Activated T-helper 1 cell treated with anti-CD3 and anti-CD28 coated beads, Interleukin-12 subunit alpha, Interleukin-12 subunit beta, Interleukin-2, Interleukin-4 antibody, amounts not matched to agents 30 ng/mL and 10 ng/mL and 1 ng/mL, durations not matched to agents 14 hours and 24 hours and 36 hours (primary cell): ENCODE measurements at regions of chr10 and their contacts with region 1.

Region 1: DNA sequence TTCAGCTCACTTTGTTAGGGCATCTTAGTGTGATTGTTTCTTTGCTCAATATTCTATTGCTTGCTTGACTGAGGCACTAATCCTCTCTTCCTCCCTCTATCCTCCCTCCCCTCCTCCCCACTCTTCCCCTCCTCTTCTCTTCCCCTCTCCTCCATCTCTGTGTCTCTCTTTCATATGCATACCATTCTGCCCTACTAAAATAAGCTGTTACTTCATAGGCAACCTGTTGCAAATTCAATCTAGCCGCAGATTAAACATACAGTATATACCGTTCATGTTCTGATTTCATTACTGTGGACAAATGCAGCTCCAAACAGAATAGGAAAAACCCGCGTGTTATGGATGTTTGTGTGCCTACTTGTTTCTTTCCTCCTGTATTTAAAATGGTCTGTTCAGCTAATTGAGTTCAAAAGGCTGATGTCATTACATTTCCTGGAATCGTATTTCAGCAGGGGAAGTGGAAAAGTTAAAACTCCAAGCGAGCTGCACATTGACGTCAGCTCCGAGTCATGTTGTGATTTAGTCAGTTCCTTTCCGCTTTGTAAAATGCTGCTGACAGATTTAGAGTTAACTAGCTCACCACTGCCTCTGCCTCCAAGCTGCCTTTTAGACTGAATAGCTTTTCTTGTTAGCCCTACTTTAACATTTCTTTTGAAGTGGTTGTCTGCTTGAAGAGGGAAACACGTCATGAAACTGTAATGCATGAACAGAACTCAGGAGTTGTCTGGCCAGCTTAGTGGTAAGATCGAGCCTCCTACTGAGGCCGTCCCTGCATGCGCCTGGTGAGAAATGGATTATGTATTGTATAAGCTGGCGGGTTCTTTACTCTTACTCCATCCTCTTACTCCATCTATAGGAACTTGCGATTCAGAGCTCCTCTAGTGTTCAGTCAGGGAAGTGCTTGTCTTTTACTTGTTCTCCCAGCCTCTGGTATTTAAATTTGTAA is 69.0 kb downstream of the CREM start:
- DNase-seq: peak; percentile 76
- H3K4me3 Mint-ChIP-seq: peak overlapping the region; percentile 92
- H3K27ac Mint-ChIP-seq: peak overlapping the region; percentile 99
- H3K4me1 Mint-ChIP-seq: peaks cover 64% of the 10 kb centered on the region
- H3K27me3 Mint-ChIP-seq: no peaks in the 10 kb centered on the region

Region 2: DNA sequence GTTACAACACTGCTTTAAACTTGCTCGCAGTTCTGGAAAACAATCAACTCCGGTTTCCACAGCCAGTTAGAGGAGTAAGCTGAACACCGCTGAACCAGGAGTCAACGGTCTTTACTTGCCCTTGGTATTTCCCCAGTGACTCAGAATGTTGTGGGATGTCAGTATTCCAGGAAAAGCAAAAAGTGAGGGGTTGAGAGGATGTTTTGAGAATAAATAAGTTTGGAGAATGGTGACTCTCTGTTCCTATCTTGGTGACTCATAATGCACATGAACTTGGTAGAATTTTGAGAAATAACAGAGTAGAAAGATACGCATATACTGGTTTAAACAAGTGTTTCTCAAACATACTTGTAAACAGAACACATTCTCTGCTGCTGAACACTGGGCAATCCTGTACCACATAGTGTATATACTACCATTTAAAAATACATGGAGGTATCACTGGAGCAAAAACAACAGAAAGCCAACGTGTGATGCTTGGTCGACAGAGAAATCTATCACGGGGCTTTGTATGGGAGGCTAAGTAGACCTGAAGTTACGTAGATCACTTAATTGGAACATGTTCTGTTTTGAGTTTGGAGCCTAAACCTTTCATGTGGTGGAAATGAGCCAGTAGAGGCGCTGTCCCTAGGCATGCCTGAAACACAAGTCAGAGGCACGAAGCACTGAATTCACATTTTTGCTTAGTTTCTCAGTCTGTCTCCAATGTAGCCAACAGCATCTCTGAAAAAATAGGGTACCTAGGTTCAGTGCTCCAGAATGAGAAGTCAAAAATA is 914.8 kb before region 1 on chr10:
- intact Hi-C with region 1: loop called (anchors 5 kb)
- DNase-seq: no peak
- H3K4me3 Mint-ChIP-seq: peak overlapping the region; percentile 45
- H3K27ac Mint-ChIP-seq: peak overlapping the region; percentile 76
- H3K4me1 Mint-ChIP-seq: peaks cover 31% of the 10 kb centered on the region
- H3K27me3 Mint-ChIP-seq: no peaks in the 10 kb centered on the region

Region 3: GRCh38 chr10:35126530-35127296 is 68.9 kb before region 1 on chr10 and contains the start of gene CREM:
- intact Hi-C with region 1: loop called (anchors 1 kb)
- DNase-seq: peak; percentile 97
- H3K4me3 Mint-ChIP-seq: peak within 1 kb of the TSS; percentile 94
- H3K27ac Mint-ChIP-seq: peak within 1 kb of the TSS; percentile 93
- H3K4me1 Mint-ChIP-seq: peaks cover 66% of the 10 kb centered on the region
- H3K27me3 Mint-ChIP-seq: no peaks in the 10 kb centered on the region
- total RNA-seq, gene CREM: 101 and 106 TPM in 2 replicates

Region 4: DNA sequence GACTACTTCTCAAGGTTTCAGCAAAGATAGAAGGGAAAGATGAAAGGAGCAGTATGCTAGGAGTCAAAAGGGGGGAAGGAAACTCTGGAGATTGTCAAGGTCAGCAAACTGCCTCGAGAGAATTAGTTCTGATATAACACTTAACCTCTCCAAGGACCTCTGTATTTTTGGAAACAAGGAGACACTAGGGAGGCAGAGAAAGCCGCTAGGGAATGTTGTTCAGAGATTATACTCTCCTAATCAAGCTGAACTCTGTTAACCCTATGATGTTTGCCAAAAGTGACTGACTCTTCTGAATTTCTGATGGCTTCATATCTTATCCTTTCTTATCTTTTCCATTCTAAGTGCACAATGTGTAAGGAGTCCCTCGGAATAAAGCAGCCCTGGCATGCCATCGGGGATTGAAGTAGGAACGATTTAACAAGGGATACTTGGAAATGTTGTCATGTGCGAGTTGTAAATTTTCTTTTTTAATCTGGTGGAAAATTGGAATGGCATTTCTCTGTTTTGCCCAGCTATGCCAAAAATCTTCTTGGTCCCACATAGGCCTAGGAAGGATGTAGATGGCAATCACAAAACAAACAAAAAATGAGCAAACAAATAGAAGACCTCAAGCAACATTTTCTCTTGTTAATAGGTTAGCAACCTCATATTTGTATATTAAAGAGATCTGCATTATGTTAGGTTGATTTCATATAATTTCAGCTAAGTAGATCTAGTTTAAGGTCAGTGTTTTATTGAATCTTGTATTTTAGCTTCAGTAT is 41.7 kb before region 1 on chr10:
- intact Hi-C with region 1: loop called (anchors 1 kb)
- DNase-seq: no peak
- H3K4me3 Mint-ChIP-seq: no peak overlapping the region
- H3K27ac Mint-ChIP-seq: no peak overlapping the region
- H3K4me1 Mint-ChIP-seq: peaks cover 44% of the 10 kb centered on the region
- H3K27me3 Mint-ChIP-seq: no peaks in the 10 kb centered on the region

Region 5: DNA sequence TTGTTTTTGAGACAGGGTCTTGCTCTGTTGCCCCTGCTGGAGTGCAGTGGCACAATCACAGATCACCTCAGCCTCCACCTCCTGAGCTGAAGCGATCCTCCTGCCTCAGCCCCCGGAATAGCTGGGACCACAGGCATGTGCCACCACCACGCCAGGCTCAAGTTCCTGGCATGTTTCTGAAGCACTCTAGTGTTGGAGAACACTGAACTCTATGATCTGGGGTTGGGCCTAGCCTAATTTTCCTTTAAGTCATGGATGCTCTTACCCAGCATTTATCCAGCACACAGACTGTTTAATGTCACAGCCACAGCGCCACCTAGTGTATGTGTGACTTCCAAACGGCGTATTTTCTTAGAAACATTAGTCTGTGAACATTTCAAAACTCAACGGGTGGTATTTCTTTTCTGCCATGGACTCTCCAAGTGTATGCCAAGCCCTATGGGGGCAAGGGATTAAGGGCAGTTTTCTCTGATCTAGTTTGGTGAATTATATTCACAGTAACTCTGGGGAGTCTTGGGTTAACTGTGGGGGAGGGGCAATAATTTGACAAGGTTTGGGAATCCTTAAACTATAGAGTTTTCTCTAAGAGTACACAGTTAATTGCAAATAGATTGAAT is 22.8 kb after region 1 on chr10:
- intact Hi-C with region 1: loop called (anchors 1 kb)
- DNase-seq: peak; percentile 73
- H3K4me3 Mint-ChIP-seq: peak overlapping the region; percentile 74
- H3K27ac Mint-ChIP-seq: peak overlapping the region; percentile 95
- H3K4me1 Mint-ChIP-seq: peaks cover 61% of the 10 kb centered on the region
- H3K27me3 Mint-ChIP-seq: no peaks in the 10 kb centered on the region

Region 6: DNA sequence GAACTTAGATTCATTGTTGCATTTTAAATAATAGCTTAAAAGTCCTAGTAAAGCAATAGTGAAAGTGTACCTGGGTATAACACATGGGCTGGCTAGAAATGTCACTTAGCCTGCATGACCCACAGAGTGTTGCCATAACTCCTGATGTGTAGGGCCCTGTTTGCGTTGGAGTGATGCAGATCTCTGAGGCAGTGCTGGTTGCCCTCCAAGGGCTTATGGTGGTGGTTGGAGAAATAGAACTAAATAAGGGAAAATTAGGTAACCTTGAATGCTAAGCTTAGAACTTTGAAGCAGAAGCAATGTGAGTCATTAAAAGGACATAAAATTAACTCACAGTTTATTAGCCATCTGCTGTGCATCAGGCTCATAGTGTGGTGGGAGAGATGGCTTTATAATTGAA is 246.4 kb after region 1 on chr10:
- intact Hi-C with region 1: loop called (anchors 5 kb)
- DNase-seq: no peak
- H3K4me3 Mint-ChIP-seq: no peak overlapping the region
- H3K27ac Mint-ChIP-seq: peak overlapping the region; percentile 79
- H3K4me1 Mint-ChIP-seq: peaks cover 36% of the 10 kb centered on the region
- H3K27me3 Mint-ChIP-seq: peaks cover 2% of the 10 kb centered on the region